ENCODE measurements at regions of chr11 and their contacts with region 1.

Region 1: GRCh38 chr11:16356057-16356760 is at the start of gene SOX6:
- DNase-seq: no peak

Region 2: DNA sequence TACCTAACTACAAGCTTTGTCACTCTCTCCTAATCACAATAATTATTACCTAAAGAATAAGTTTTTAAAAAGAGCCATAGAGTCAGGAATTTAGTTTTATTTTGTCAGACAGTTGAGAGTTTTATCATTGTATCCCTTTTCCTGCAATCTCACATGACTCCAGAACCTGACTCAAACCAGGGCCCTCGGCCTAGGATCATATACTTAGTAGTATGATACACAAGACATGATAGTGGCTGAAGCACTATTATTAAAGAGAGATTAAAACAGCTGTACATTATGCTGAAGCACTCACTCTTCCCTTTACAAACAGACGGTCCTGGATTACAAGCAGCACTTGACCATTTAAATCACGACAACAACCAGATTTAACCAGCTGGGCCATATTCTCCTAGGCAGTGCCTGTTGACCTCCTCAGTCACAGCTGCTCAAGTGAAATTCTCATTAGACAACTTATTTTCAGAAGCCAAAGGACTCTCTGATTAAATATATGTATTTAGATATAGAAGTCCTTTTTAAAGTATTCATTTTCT is 43.9 kb before region 1 on chr11:
- intact Hi-C with region 1: no loop called
- DNase-seq: no peak

Region 3: DNA sequence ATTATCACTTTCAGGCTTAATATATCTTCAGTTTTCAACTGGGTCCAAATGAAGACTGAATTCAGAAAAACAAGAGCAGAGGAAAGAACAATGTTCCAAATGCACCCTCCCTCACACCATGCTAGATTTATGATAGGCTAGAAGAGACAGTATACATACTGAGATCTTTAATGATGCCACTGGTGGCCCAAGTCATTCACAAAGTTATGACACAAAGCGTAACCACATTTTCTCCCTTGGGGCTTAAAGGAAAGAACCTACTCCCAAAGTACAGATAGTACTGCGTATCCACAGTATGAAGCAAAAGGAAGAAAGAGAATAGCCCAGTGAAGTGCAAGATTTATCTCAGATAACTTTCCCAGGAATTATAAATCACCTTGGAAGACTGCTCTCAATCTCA is 11.0 kb after region 1 on chr11:
- intact Hi-C with region 1: no loop called
- DNase-seq: no peak

Region 4: DNA sequence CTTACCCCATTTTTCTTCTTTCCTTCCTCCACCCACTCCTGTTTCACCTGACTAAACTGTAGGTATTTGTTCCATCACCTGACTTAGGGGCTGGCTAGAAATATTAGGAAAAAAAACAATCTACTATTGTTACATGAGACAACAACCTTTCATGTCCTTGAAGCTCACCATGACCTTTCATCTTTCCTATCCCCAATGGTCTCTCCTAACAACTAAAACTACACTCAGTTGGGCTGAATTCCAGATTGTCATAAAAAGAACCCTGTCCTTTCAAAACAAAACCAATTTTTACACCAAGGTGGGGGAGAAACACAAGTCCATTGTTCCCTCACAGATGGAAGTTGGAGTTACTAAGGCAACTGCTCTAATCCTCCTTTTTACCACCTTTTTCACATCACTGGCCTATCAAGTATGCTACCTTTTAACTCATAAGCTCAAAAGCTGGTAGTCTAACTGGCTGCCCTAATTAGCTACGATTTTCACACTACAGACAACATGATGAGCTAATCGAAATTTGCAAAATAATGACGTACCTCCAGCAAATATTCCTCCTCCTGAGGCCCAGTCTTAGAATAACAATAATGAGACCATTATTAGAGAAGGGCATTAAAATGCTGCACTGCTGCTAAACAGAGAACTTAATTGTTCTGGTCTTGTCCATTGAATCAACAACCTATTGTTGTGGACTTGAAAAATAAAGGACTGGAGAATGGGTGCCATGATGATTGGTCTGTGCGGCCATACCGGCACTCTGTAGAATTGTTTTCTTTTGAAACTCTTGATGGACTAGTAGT is 46.6 kb after region 1 on chr11:
- intact Hi-C with region 1: loop called (anchors 5 kb)
- DNase-seq: peak in 4 of 10 donors; percentile 18 to 63 (median 38)

Region 5: DNA sequence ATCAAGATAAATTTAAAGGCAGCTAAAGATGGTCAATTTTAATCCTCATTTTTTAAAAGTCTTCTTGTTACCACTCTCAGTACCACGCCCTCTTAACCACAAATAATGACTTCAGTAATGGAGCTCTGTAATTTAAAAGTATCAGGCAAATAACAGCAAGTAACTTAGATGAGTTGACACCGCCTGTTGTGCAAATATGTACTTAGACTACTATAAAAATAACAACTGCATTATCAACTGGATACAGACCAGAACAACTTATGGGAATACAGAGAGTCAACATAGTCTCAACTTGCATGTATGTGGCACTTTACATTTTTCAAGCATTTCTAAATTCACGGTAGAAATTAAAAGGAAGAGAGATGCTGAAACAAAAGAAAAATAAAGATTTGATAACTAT is 131.5 kb after region 1 on chr11:
- intact Hi-C with region 1: no loop called
- DNase-seq: no peak

Measured in posterior cingulate gyrus (tissue), 11 donors.